Posterior vena cava (tissue), 2 donors: ENCODE measurements at regions of chr7 and their contacts with region 1.

Region 1: GRCh38 chr7:4610768-4611467 is 71.2 kb upstream of the FOXK1 start:
- DNase-seq: peak; percentile 53

Region 2: GRCh38 chr7:4631664-4632171 is 20.8 kb after region 1 on chr7:
- intact Hi-C with region 1: loop called in 1 of 2 experiments (anchors 1 kb)
- DNase-seq: peak; percentile 95